Thyroid gland (tissue), 4 donors: ENCODE measurements at regions of chr10 and their contacts with region 1.

Region 1: GRCh38 chr10:97869091-97870042 is 19.7 kb downstream of the GOLGA7B start:
- DNase-seq: peak; percentile 93 to 94
- H3K4me3 ChIP-seq: no peak overlapping the region
- H3K27ac ChIP-seq: no peak overlapping the region
- H3K4me1 ChIP-seq: peaks cover 5 to 6% of the 10 kb centered on the region in 2 donors
- H3K27me3 ChIP-seq: no peaks in the 10 kb centered on the region
- CTCF ChIP-seq: peak; percentile 51 to 99 (median 92)
- POLR2A ChIP-seq: no peak

Region 2: DNA sequence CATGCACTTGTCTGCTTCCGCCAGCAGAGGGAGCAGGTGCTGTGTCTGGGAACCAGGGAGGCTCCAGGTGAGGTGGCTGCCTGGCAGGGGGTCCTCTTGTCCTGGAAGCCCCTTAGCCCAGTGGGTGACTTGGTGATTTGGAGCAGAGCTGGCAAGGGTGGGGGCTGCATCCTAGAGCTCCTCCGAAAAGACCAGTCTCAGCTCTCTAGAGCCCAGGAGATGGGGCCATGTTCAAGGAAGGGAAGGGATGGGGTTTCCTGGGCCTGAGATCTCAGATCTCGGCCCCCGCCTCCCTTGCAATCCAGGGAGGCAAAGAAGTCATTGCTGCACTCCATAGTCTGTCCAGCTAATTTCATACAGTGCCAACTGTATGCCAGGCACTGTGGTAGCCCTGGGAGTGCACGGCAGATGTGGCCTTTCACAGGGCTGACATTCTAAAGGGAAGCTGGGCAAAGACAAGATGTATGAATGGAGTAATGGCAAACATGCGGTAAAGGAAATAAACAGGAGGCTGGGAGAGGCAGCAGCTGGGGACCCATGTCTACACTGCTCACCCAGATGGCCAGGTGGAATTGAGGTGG is 77.1 kb before region 1 on chr10:
- intact Hi-C with region 1: loop called (anchors 2 kb)
- DNase-seq: peak; percentile 71 to 77
- H3K4me3 ChIP-seq: no peak overlapping the region
- H3K27ac ChIP-seq: no peak overlapping the region
- H3K4me1 ChIP-seq: peaks cover 0 to 9% of the 10 kb centered on the region in 2 donors
- H3K27me3 ChIP-seq: no peaks in the 10 kb centered on the region
- CTCF ChIP-seq: peak; percentile 79 to 91 (median 83)
- POLR2A ChIP-seq: no peak